ENCODE measurements at regions of chr19 and their contacts with region 1.

Region 1: GRCh38 chr19:11435058-11435832 is at the starts of genes ODAD3 and PRKCSH:
- DNase-seq: peak; percentile 95 to 99
- H3K4me3 ChIP-seq: peak within 1 kb of the TSS; percentile 82 to 93
- H3K27ac ChIP-seq: peak within 1 kb of the TSS; percentile 73 to 80
- H3K4me1 ChIP-seq: peaks cover 12 to 14% of the 10 kb centered on the region in 2 donors
- H3K27me3 ChIP-seq: no peaks in the 10 kb centered on the region
- CTCF ChIP-seq: peak; percentile 86 to 97 (median 93)
- total RNA-seq, gene ODAD3: not detected
- total RNA-seq, gene PRKCSH: 208 TPM

Region 2: DNA sequence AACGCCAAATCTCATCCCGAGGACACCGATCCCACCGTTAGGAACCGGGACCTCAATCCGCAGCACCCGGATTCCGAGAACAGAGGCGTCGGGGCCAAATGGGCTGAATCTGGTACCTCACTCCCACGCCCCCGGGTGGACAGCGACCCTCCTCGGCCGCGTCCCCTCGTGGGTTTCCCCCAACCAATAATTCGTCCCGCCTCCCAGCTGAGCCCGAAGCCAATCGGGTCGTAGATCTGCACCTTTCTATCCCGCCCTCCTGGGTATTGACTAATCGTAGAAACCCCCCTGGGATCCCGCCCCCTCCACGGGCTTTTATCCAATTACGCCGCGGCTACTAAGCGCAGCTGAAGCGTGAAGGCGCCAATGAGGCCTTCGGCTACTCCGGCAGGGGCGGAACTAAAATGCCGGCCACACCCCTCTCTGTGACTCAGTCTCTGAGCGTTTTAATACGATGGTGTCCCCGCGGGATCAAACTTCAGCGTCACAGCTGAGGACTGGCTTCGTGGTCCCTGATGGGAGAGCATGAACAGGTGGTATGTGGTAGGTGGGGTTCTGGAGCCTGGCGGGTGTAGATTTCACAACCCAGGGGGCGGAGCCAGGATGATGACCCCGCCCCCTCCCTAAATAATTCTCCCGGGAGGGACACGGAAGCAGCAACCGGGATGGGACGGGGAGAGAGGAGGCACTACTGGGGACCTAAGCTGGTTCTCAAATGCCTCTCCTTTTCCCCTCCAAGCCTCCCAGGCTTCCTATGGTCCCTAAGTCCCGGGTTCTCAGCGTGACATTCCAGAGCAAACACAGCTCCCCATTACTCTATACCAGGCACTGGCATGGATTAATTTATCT is 88.9 kb before region 1 on chr19 and contains the starts of genes CCDC159 and TMEM205:
- intact Hi-C with region 1: loop called (anchors 1 kb)
- DNase-seq: peak; percentile 98 to 100
- H3K4me3 ChIP-seq: peak within 1 kb of the TSS; percentile 65 to 92
- H3K27ac ChIP-seq: peak within 1 kb of the TSS; percentile 79 to 94
- H3K4me1 ChIP-seq: peaks cover 11 to 17% of the 10 kb centered on the region in 2 donors
- H3K27me3 ChIP-seq: no peaks in the 10 kb centered on the region
- CTCF ChIP-seq: no peak
- total RNA-seq, gene CCDC159: 79.0 TPM
- total RNA-seq, gene TMEM205: 225 TPM

Region 3: GRCh38 chr19:11374433-11375142 is 60.7 kb before region 1 on chr19 and contains the start of gene SWSAP1:
- intact Hi-C with region 1: loop called (anchors 1 kb)
- DNase-seq: peak; percentile 98 to 99
- H3K4me3 ChIP-seq: peak within 1 kb of the TSS; percentile 64 to 65
- H3K27ac ChIP-seq: peak within 1 kb of the TSS; percentile 93 to 94
- H3K4me1 ChIP-seq: peaks cover 3 to 39% of the 10 kb centered on the region in 2 donors
- H3K27me3 ChIP-seq: no peaks in the 10 kb centered on the region
- CTCF ChIP-seq: no peak
- total RNA-seq, gene SWSAP1: 4.5 TPM

Region 4: GRCh38 chr19:11380653-11381534 is 54.4 kb before region 1 on chr19:
- intact Hi-C with region 1: loop called (anchors 1 kb)
- DNase-seq: peak; percentile 88 to 97
- H3K4me3 ChIP-seq: peak overlapping the region; percentile 71 to 81
- H3K27ac ChIP-seq: peak overlapping the region; percentile 81 to 84
- H3K4me1 ChIP-seq: peaks cover 17 to 56% of the 10 kb centered on the region in 2 donors
- H3K27me3 ChIP-seq: no peaks in the 10 kb centered on the region
- CTCF ChIP-seq: peak; percentile 70 to 87 (median 71)

Region 5: GRCh38 chr19:11410682-11411081 is 24.6 kb before region 1 on chr19:
- intact Hi-C with region 1: no loop called
- DNase-seq: no peak
- H3K4me3 ChIP-seq: no peak overlapping the region
- H3K27ac ChIP-seq: no peak overlapping the region
- H3K4me1 ChIP-seq: no peaks in the 10 kb centered on the region
- H3K27me3 ChIP-seq: no peaks in the 10 kb centered on the region
- CTCF ChIP-seq: no peak

Region 6: GRCh38 chr19:11422163-11423021 is 12.9 kb before region 1 on chr19:
- intact Hi-C with region 1: loop called (anchors 1 kb)
- DNase-seq: peak; percentile 77 to 90
- H3K4me3 ChIP-seq: peak overlapping the region; percentile 42 to 65
- H3K27ac ChIP-seq: peak overlapping the region; percentile 62 to 79
- H3K4me1 ChIP-seq: peaks cover 14 to 35% of the 10 kb centered on the region in 2 donors
- H3K27me3 ChIP-seq: no peaks in the 10 kb centered on the region
- CTCF ChIP-seq: no peak

Region 7: GRCh38 chr19:11505032-11505503 is 69.8 kb after region 1 on chr19:
- intact Hi-C with region 1: loop called (anchors 2 kb)
- DNase-seq: peak; percentile 93 to 98
- H3K4me3 ChIP-seq: peak overlapping the region; percentile 84 to 94
- H3K27ac ChIP-seq: peak overlapping the region; percentile 95 to 97
- H3K4me1 ChIP-seq: peaks cover 2 to 6% of the 10 kb centered on the region in 2 donors
- H3K27me3 ChIP-seq: no peaks in the 10 kb centered on the region
- CTCF ChIP-seq: no peak

Measured in ascending aorta (tissue), 2 donors.